BJ (cell line): ENCODE measurements at regions of chr6 and their contacts with region 1.

Region 1: DNA sequence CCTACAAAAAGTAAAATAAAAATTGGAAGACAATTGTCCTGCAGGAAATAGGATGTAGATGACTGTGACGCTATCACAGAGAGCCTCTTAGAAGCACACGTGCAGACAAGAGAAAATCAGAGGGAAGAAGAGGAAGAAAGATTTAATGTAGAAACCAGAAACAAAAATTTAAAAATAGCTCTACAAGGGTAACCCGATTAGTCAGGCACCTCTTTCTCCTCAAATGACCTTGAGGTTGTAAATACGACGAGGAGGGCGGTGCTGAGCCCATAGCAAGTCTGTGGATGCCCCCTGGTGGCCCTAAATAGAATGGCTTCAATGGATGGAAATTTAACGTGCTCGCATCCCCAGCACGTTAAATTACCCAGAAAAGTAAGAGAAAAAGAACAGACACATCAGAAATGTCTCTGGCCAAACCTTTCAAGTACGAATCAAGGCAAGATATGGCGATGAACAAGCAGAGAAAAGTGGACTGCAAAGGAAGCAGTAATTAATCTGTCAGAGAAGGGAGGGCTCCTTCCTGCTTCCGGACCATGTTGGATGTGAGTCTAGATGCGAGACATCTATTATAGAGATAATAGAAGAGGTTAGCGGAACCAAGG is 4.2 kb upstream of the PRPH2 start:
- DNase-seq: peak; percentile 38
- H3K4me3 ChIP-seq: peak overlapping the region; percentile 34
- H3K27me3 ChIP-seq: no peaks in the 10 kb centered on the region
- CTCF ChIP-seq: peak; percentile 87

Region 2: GRCh38 chr6:41271901-41272395 is 1454.6 kb before region 1 on chr6:
- CTCF ChIA-PET with region 1: no interaction called
- POLR2A ChIA-PET with region 1: no interaction called
- DNase-seq: no peak
- H3K4me3 ChIP-seq: no peak overlapping the region
- H3K27me3 ChIP-seq: peaks cover 2% of the 10 kb centered on the region; the same call in 1 of the 2 replicates
- CTCF ChIP-seq: no peak

Region 3: GRCh38 chr6:42618686-42619085 is 107.9 kb before region 1 on chr6:
- CTCF ChIA-PET with region 1: no interaction called
- POLR2A ChIA-PET with region 1: no interaction called
- DNase-seq: peak; percentile 43
- H3K4me3 ChIP-seq: no peak overlapping the region
- H3K27me3 ChIP-seq: no peaks in the 10 kb centered on the region
- CTCF ChIP-seq: no peak

Region 4: DNA sequence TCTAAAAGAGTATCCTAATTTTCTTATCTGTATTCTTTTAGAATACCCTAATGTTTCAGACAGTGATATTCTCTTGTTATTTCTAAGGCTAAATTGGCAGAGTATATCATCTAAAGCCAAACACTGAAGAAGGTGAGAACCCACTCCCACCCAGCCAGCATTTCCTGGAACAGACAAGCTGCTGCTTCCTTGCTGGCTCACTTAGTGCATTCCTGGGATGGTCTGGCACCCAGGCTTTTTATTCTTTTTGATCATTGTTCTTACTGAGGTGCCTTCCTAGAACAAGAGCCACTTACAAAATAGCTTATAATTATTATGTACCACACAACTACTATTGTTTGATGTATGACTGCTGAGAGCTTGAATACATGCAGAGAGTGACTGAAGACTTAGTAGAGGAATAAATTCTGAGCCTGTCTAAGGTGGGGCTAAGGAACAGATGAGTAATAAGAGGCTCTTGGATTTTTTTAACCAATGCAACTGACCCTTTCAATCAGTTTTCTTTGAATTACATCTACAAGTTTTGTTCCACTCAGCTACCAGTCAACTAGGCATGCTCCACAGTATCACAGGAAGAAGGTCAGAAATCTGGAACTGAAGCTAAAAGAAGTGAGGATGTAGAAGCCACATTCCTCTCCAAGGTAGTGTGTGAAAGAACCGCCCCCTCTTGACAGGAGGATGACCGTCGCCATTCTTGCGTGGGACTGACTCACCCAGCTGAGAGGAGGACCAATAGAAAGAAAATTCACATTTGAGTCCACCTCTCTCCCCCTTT is 34.3 kb before region 1 on chr6:
- CTCF ChIA-PET with region 1: interaction called, 23 read pairs
- POLR2A ChIA-PET with region 1: no interaction called
- DNase-seq: no peak
- H3K4me3 ChIP-seq: no peak overlapping the region
- H3K27me3 ChIP-seq: no peaks in the 10 kb centered on the region
- CTCF ChIP-seq: no peak

Region 5: GRCh38 chr6:42791706-42792320 is 65.2 kb after region 1 on chr6:
- CTCF ChIA-PET with region 1: no interaction called
- POLR2A ChIA-PET with region 1: no interaction called
- DNase-seq: no peak
- H3K4me3 ChIP-seq: no peak overlapping the region
- H3K27me3 ChIP-seq: no peaks in the 10 kb centered on the region
- CTCF ChIP-seq: no peak

Region 6: DNA sequence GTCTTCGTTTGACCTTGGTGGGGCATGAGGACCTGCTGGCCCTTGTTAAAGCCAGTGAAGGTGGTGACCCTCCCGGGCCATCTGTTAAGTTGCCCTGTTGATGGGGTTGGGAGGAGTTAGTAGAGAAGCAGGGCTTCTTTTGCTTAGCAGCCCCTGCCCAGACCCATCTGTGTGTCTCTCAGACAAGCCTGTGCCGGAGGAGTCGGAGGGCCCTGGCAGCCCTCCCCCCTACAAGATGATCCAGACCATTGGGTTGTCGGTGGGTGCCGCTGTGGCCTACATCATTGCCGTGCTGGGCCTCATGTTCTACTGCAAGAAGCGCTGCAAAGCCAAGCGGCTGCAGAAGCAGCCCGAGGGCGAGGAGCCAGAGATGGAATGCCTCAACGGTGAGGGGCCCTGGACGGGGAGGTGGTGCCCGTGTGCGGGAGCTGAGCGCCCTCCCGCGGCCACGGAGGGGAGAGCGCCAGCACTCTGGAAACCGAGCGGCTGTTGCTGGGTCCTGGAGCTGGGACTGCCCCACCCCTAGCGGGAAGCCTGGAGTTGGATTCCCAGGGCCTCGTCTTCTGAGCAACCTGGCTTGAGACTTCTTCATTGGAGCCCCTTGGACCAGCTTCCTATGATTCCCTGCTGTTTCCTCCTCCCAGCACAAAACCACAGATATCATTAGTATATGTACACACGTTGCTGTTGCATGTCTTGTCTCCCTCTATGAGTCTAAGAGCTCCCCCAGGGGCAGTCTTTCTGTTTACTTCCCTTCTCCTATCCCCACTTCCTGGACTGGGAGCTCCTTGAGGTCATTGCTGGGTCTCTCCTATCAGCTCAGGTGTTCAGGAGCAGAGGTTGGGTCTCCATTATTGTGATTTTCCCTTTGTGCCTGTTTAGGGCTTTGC is 416.9 kb after region 1 on chr6:
- CTCF ChIA-PET with region 1: no interaction called
- POLR2A ChIA-PET with region 1: no interaction called
- DNase-seq: peak; percentile 62
- H3K4me3 ChIP-seq: no peak overlapping the region
- H3K27me3 ChIP-seq: no peaks in the 10 kb centered on the region
- CTCF ChIP-seq: peak; percentile 99